Naive thymus-derived CD4-positive, alpha-beta T cell (primary cell): ENCODE measurements at regions of chr13 and their contacts with region 1.

Region 1: GRCh38 chr13:21603531-21604448 is at the start of gene MICU2:
- DNase-seq: peak; percentile 92 to 98 (median 96)
- ATAC-seq: peak; percentile 95
- H3K4me3 ChIP-seq: peak within 1 kb of the TSS; percentile 66
- H3K4me3 Mint-ChIP-seq: peak within 1 kb of the TSS; percentile 77 to 94 (median 88)
- H3K27ac ChIP-seq: peak within 1 kb of the TSS; percentile 93
- H3K27ac Mint-ChIP-seq: peak within 1 kb of the TSS; percentile 91 to 97 (median 95)
- H3K4me1 ChIP-seq: peaks cover 16 to 27% of the 10 kb centered on the region in 2 donors
- H3K4me1 Mint-ChIP-seq: peaks cover 25 to 53% (median 49%) of the 10 kb centered on the region in 7 donors
- H3K27me3 ChIP-seq: no peaks in the 10 kb centered on the region
- H3K27me3 Mint-ChIP-seq: peaks cover 0 to 21% (median 7%) of the 10 kb centered on the region in 5 donors
- total RNA-seq, gene MICU2: 32.5 to 45.6 (median 37.5) TPM

Region 2: GRCh38 chr13:19959831-19960652 is 1643.7 kb before region 1 on chr13:
- CTCF ChIA-PET with region 1: no interaction called
- POLR2A ChIA-PET with region 1: no interaction called
- intact Hi-C with region 1: loop called in 1 of 2 experiments (anchors 5 kb)
- DNase-seq: peak; percentile 61 to 91 (median 86)
- ATAC-seq: peak; percentile 63
- H3K4me3 ChIP-seq: peak overlapping the region; percentile 84
- H3K4me3 Mint-ChIP-seq: peak overlapping the region; percentile 90 to 99 (median 98)
- H3K27ac ChIP-seq: peak overlapping the region; percentile 97
- H3K27ac Mint-ChIP-seq: peak overlapping the region; percentile 91 to 99 (median 97)
- H3K4me1 ChIP-seq: peaks cover 19 to 30% of the 10 kb centered on the region in 2 donors
- H3K4me1 Mint-ChIP-seq: peaks cover 19 to 45% (median 31%) of the 10 kb centered on the region in 7 donors
- H3K27me3 ChIP-seq: no peaks in the 10 kb centered on the region
- H3K27me3 Mint-ChIP-seq: peaks cover 0 to 12% (median 0%) of the 10 kb centered on the region in 5 donors

Region 3: GRCh38 chr13:20703780-20704445 is 899.9 kb before region 1 on chr13:
- CTCF ChIA-PET with region 1: no interaction called
- POLR2A ChIA-PET with region 1: no interaction called
- intact Hi-C with region 1: loop called in 1 of 2 experiments (anchors 10 kb)
- DNase-seq: peak; percentile 70 to 84 (median 80)
- ATAC-seq: peak; percentile 93
- H3K4me3 ChIP-seq: no peak overlapping the region
- H3K4me3 Mint-ChIP-seq: peak overlapping the region in 4 of 10 donors; percentile 59 to 97 (median 72)
- H3K27ac ChIP-seq: no peak overlapping the region
- H3K27ac Mint-ChIP-seq: peak overlapping the region in 1 of 9 donors; percentile 56
- H3K4me1 ChIP-seq: peaks cover 3 to 8% of the 10 kb centered on the region in 2 donors
- H3K4me1 Mint-ChIP-seq: peaks cover 0 to 13% (median 8%) of the 10 kb centered on the region in 7 donors
- H3K27me3 ChIP-seq: peaks cover 0 to 5% of the 10 kb centered on the region in 2 donors
- H3K27me3 Mint-ChIP-seq: peaks cover 13 to 48% (median 17%) of the 10 kb centered on the region in 5 donors

Region 4: DNA sequence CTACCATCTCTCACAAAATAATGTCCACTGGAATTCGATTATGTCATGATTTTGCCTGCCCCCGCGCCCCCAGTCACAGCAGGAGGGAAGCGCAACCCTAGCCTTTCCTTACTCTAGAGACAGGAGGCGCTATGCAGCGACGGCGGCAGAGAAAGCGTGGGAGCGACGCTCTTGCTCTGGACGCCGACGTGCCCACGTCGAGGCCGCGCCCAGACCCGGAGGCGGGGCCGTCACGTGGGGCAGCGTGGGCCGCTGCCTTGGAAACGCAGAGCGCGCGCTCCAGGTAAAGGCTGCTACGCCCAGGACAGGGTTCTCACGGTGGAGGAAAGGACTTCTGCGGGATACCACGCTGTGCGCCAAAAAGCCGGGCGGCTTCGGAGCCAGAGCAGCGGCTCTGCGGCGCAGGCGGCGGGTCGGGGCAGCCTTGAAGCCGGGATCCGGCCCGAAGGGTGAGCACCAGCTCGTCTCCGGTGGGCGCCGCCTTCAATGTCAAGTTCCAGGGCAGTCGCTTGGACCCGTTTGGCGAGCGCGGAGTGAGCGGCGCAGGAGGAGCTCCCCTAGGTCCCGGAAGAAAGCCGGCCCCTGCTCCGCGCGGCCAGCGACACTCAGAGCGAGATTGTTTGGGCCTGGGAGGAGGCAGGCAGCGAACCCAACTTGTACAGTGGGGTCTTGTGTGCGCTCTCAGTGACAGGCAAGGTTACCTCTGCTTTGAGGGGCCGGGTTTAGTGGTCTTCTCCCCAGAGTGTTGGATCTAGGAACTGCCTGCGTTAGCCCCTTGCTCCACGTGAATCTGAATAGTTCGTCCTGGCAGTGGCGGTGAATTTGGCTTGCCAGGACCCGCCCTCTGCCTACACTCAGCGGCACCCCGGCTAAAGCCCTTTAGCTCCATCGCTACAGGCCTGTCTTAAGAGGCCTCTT is 305.6 kb before region 1 on chr13:
- CTCF ChIA-PET with region 1: interaction called, 3 read pairs
- POLR2A ChIA-PET with region 1: interaction called, 9 read pairs
- intact Hi-C with region 1: loop called (anchors 1 kb)
- DNase-seq: peak; percentile 79 to 91 (median 85)
- ATAC-seq: peak; percentile 100
- H3K4me3 ChIP-seq: peak overlapping the region; percentile 90
- H3K4me3 Mint-ChIP-seq: peak overlapping the region; percentile 78 to 95 (median 86)
- H3K27ac ChIP-seq: peak overlapping the region; percentile 44
- H3K27ac Mint-ChIP-seq: peak overlapping the region; percentile 58 to 90 (median 72)
- H3K4me1 ChIP-seq: peaks cover 11 to 15% of the 10 kb centered on the region in 2 donors
- H3K4me1 Mint-ChIP-seq: peaks cover 11 to 25% (median 22%) of the 10 kb centered on the region in 7 donors
- H3K27me3 ChIP-seq: no peaks in the 10 kb centered on the region
- H3K27me3 Mint-ChIP-seq: no peaks in the 10 kb centered on the region

Region 5: GRCh38 chr13:21402586-21403228 is 201.1 kb before region 1 on chr13:
- CTCF ChIA-PET with region 1: no interaction called
- POLR2A ChIA-PET with region 1: no interaction called
- intact Hi-C with region 1: no loop called
- DNase-seq: no peak
- ATAC-seq: no peak
- H3K4me3 ChIP-seq: no peak overlapping the region
- H3K4me3 Mint-ChIP-seq: no peak overlapping the region
- H3K27ac ChIP-seq: no peak overlapping the region
- H3K27ac Mint-ChIP-seq: peak overlapping the region in 8 of 9 donors; percentile 1 to 78 (median 56)
- H3K4me1 ChIP-seq: peaks cover 6 to 13% of the 10 kb centered on the region in 2 donors
- H3K4me1 Mint-ChIP-seq: peaks cover 19 to 56% (median 47%) of the 10 kb centered on the region in 7 donors
- H3K27me3 ChIP-seq: no peaks in the 10 kb centered on the region
- H3K27me3 Mint-ChIP-seq: no peaks in the 10 kb centered on the region

Region 6: DNA sequence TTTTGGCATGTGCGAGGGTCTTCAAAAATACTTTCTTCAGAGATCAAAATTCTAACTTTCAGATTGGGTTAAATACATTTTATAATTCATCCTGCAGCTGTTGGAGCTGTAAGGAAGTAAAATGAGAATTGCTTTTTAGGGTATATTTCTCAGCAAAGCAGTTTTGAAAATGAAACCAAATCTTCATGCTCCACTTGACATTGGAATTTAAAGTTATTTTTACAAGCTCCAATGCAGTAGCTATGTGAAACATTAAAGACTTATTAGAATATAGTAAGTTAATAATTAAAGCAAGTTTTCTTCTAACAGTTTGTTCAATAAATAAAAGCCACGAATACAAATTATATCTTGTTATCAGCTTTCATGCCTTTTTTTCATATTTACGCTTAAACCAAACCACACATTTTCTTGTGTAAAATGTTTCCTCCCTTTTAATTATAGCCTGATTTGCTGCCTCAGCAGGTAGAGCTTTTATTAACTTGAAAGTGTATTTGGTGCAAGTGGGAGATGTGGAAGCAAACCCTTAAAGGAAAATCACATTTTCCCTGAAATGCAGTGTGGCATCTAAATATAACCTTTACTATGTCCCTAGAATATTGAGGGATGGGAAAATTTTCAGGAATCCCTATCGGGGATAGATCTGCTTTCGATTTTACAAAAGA is 12.5 kb after region 1 on chr13:
- CTCF ChIA-PET with region 1: interaction called, 3 read pairs
- POLR2A ChIA-PET with region 1: interaction called, 15 read pairs
- intact Hi-C with region 1: no loop called
- DNase-seq: no peak
- ATAC-seq: no peak
- H3K4me3 ChIP-seq: no peak overlapping the region
- H3K4me3 Mint-ChIP-seq: peak overlapping the region in 1 of 10 donors; percentile 27
- H3K27ac ChIP-seq: no peak overlapping the region
- H3K27ac Mint-ChIP-seq: no peak overlapping the region
- H3K4me1 ChIP-seq: no peaks in the 10 kb centered on the region
- H3K4me1 Mint-ChIP-seq: no peaks in the 10 kb centered on the region
- H3K27me3 ChIP-seq: no peaks in the 10 kb centered on the region
- H3K27me3 Mint-ChIP-seq: peaks cover 6 to 39% (median 16%) of the 10 kb centered on the region in 5 donors

Region 7: GRCh38 chr13:21703824-21704499 is 100.2 kb after region 1 on chr13:
- CTCF ChIA-PET with region 1: no interaction called
- POLR2A ChIA-PET with region 1: no interaction called
- intact Hi-C with region 1: no loop called
- DNase-seq: no peak
- ATAC-seq: no peak
- H3K4me3 ChIP-seq: no peak overlapping the region
- H3K4me3 Mint-ChIP-seq: no peak overlapping the region
- H3K27ac ChIP-seq: no peak overlapping the region
- H3K27ac Mint-ChIP-seq: no peak overlapping the region
- H3K4me1 ChIP-seq: no peaks in the 10 kb centered on the region
- H3K4me1 Mint-ChIP-seq: no peaks in the 10 kb centered on the region
- H3K27me3 ChIP-seq: no peaks in the 10 kb centered on the region
- H3K27me3 Mint-ChIP-seq: peaks cover 2 to 19% (median 10%) of the 10 kb centered on the region in 5 donors

Region 8: GRCh38 chr13:21901801-21902708 is 298.3 kb after region 1 on chr13:
- CTCF ChIA-PET with region 1: no interaction called
- POLR2A ChIA-PET with region 1: no interaction called
- intact Hi-C with region 1: no loop called
- DNase-seq: no peak
- ATAC-seq: no peak
- H3K4me3 ChIP-seq: no peak overlapping the region
- H3K4me3 Mint-ChIP-seq: no peak overlapping the region
- H3K27ac ChIP-seq: no peak overlapping the region
- H3K27ac Mint-ChIP-seq: no peak overlapping the region
- H3K4me1 ChIP-seq: no peaks in the 10 kb centered on the region
- H3K4me1 Mint-ChIP-seq: peaks cover 0 to 2% (median 0%) of the 10 kb centered on the region in 7 donors
- H3K27me3 ChIP-seq: no peaks in the 10 kb centered on the region
- H3K27me3 Mint-ChIP-seq: peaks cover 0 to 3% (median 0%) of the 10 kb centered on the region in 5 donors

Region 9: DNA sequence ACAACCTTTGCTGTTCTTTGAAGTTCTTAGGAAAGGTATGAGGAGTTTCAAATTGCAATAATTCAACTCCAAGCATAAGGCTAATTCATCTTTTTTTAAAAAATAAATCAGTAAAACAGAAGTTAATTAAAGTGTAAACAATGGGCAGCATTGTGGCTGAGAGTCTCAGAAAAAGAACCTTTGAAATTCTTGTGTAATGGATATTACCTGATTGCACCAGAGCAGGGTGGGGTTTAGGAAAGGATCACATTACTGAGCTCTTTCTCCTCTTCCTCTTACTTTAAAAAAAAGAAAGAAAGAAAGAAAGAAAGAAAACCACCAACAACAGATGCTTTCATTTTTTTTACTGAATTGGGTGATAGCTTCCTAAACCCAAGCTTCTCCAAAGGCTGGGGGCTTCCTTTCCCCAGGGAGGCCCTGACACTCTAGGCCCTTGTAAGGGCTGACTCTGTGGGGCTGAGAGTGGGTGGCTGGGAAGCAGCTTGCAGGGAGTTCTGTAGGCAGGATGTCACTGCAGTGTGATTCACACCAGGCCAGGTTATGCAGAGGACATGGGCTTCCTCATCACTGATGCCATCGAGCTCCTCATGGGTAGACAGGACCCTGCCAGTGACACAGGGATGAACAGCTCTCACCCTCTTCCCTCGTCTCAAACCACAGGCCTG is 631.6 kb after region 1 on chr13:
- CTCF ChIA-PET with region 1: no interaction called
- POLR2A ChIA-PET with region 1: no interaction called
- intact Hi-C with region 1: no loop called
- DNase-seq: peak in 1 of 9 donors; percentile 7
- ATAC-seq: peak; percentile 41
- H3K4me3 ChIP-seq: no peak overlapping the region
- H3K4me3 Mint-ChIP-seq: peak overlapping the region in 1 of 10 donors; percentile 14
- H3K27ac ChIP-seq: no peak overlapping the region
- H3K27ac Mint-ChIP-seq: peak overlapping the region in 2 of 9 donors; percentile 22 to 58
- H3K4me1 ChIP-seq: peaks cover 0 to 6% of the 10 kb centered on the region in 2 donors
- H3K4me1 Mint-ChIP-seq: peaks cover 4 to 19% (median 7%) of the 10 kb centered on the region in 7 donors
- H3K27me3 ChIP-seq: no peaks in the 10 kb centered on the region
- H3K27me3 Mint-ChIP-seq: no peaks in the 10 kb centered on the region

Region 10: GRCh38 chr13:23375001-23375971 is 1771.5 kb after region 1 on chr13:
- CTCF ChIA-PET with region 1: no interaction called
- POLR2A ChIA-PET with region 1: no interaction called
- intact Hi-C with region 1: loop called (anchors 1 kb)
- DNase-seq: peak; percentile 86 to 96 (median 92)
- ATAC-seq: peak; percentile 95
- H3K4me3 ChIP-seq: peak overlapping the region; percentile 48
- H3K4me3 Mint-ChIP-seq: peak overlapping the region; percentile 71 to 82 (median 77)
- H3K27ac ChIP-seq: peak overlapping the region; percentile 75
- H3K27ac Mint-ChIP-seq: peak overlapping the region in 8 of 9 donors; percentile 44 to 94 (median 78)
- H3K4me1 ChIP-seq: peaks cover 21 to 26% of the 10 kb centered on the region in 2 donors
- H3K4me1 Mint-ChIP-seq: peaks cover 22 to 70% (median 67%) of the 10 kb centered on the region in 7 donors
- H3K27me3 ChIP-seq: no peaks in the 10 kb centered on the region
- H3K27me3 Mint-ChIP-seq: no peaks in the 10 kb centered on the region